Activated CD8-positive, alpha-beta T cell treated with anti-CD3 and anti-CD28 coated beads, Interleukin-2, amount 10 ng/mL, durations not matched to agents 7 days and 5 days (primary cell): ENCODE measurements at regions of chr11 and their contacts with region 1.

Region 1: DNA sequence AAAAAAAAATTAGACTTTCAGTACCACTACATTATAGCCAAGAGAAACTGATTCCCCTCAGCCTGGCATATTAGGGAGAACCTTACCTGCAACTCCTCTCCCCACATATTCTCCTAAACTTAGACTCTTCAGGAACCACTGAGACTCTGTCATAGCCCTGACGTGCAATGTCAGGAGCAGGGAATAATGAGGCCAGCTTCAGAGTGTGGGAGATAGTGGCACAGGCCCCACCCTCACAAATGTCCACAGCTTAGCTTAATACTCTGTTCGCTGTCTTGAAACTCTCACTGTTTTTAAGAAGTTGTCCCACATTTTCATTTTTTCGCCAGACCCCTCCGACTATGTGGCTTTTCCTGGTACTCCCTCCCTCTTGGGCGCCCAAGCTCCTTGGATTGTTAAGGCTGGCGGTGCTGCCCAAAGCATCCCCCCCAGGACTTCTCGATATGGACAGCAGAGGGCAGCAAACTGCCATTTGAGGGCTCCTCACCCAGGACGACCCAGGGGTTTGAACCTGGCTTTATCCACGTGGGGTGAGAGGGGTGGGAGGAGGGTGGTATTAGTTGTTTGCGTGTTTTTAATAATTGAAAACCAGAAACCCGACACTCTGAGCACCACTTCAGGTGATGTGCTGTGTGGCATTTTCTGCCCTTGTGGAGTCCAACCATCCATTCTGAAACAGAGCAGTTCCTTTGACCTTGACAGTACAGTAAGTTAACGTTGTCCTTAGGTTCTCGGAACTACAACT is 45.2 kb upstream of the RASSF10 start:
- DNase-seq: peak; percentile 64
- ATAC-seq: peak; percentile 84
- H3K4me3 Mint-ChIP-seq: no peak overlapping the region
- H3K27ac Mint-ChIP-seq: no peak overlapping the region
- H3K4me1 Mint-ChIP-seq: no peaks in the 10 kb centered on the region
- H3K27me3 Mint-ChIP-seq: peaks cover 17% of the 10 kb centered on the region

Region 2: GRCh38 chr11:13183094-13183825 is 219.3 kb after region 1 on chr11:
- CTCF ChIA-PET with region 1: interaction called, 11 read pairs
- POLR2A ChIA-PET with region 1: no interaction called
- DNase-seq: peak; percentile 37
- ATAC-seq: no peak
- H3K4me3 Mint-ChIP-seq: peak overlapping the region; percentile 17
- H3K27ac Mint-ChIP-seq: no peak overlapping the region
- H3K4me1 Mint-ChIP-seq: peaks cover 5% of the 10 kb centered on the region
- H3K27me3 Mint-ChIP-seq: peaks cover 14% of the 10 kb centered on the region